ENCODE measurements at regions of chr6 and their contacts with region 1.

Region 1: GRCh38 chr6:25717866-25718740 is 36.4 kb upstream of the SLC17A4 start:
- DNase-seq: peak; percentile 59
- H3K4me3 Mint-ChIP-seq: no peak overlapping the region
- H3K27ac Mint-ChIP-seq: no peak overlapping the region
- H3K4me1 Mint-ChIP-seq: peaks cover 9% of the 10 kb centered on the region
- H3K27me3 Mint-ChIP-seq: peaks cover 12% of the 10 kb centered on the region
- CTCF ChIP-seq: peak; percentile 72

Region 2: DNA sequence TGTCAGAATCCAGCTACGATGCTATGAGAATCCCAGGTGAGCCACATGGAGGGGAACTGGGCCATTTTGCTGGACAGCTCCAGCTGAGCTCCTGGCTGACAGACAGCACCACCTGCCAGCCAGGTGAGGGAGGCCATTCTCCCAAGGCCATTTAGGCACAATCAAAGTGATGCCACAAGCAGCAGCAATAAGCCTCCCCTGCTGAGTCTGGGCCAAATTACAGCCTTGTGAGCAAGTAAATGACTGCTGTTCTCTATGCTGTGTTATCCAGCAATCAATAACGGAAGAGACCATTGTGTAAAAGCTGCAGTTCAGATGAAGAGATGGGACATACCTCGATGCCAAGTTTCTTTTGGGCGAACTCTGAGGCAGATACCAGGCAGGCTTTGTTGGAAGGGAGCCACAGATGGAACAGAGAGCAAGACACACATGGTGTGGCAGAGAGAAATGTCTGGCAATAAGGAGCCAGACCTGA is 80.1 kb before region 1 on chr6:
- CTCF ChIA-PET with region 1: interaction called, 13 read pairs
- intact Hi-C with region 1: loop called (anchors 5 kb)
- DNase-seq: peak; percentile 52
- H3K4me3 Mint-ChIP-seq: no peak overlapping the region
- H3K27ac Mint-ChIP-seq: no peak overlapping the region
- H3K4me1 Mint-ChIP-seq: peaks cover 45% of the 10 kb centered on the region
- H3K27me3 Mint-ChIP-seq: no peaks in the 10 kb centered on the region
- CTCF ChIP-seq: peak; percentile 28

Region 3: DNA sequence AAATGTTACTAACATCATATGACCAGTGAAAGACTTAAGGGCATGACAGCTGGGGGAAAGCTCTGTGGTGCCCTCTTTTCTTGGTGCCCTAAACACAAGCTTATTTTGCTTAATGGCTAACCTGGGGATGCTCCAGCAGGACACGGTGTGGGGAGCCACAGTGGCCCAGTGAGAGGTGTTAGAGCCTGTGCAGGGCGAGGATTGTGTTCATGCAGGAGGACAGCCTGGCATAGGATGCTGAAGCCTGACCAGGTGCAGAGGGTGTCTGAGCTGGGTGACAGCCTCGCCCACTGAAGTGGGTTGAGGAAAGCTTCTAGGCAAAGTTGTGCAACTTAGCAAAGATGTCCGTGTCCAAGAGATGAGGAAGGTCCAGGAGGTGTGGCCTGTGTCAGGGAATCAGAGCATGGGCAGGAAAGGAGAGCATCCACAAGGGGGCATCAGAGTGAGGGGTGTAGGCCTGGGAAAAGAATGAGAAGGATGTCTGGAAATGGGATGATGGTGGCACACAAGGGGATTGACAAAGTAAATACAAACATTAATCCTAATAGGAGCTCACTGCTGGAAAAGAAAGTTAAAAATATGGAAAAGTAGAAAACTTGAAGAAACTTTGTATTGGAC is 70.3 kb after region 1 on chr6:
- CTCF ChIA-PET with region 1: interaction called, 3 read pairs
- intact Hi-C with region 1: loop called (anchors 2 kb)
- DNase-seq: peak; percentile 88
- H3K4me3 Mint-ChIP-seq: no peak overlapping the region
- H3K27ac Mint-ChIP-seq: no peak overlapping the region
- H3K4me1 Mint-ChIP-seq: no peaks in the 10 kb centered on the region
- H3K27me3 Mint-ChIP-seq: no peaks in the 10 kb centered on the region
- CTCF ChIP-seq: peak; percentile 84

Region 4: GRCh38 chr6:25889877-25890853 is 172.1 kb after region 1 on chr6:
- CTCF ChIA-PET with region 1: interaction called, 14 read pairs
- intact Hi-C with region 1: loop called (anchors 1 kb)
- DNase-seq: peak; percentile 66
- H3K4me3 Mint-ChIP-seq: no peak overlapping the region
- H3K27ac Mint-ChIP-seq: no peak overlapping the region
- H3K4me1 Mint-ChIP-seq: peaks cover 13% of the 10 kb centered on the region
- H3K27me3 Mint-ChIP-seq: no peaks in the 10 kb centered on the region
- CTCF ChIP-seq: peak; percentile 55

Measured in Calu3 (cell line).